ENCODE measurements at regions of chr17 and their contacts with region 1.

Region 1: GRCh38 chr17:44159519-44160210 is 10.8 kb upstream of the ASB16 start:
- DNase-seq: no peak
- H3K4me3 ChIP-seq: no peak overlapping the region
- H3K27ac ChIP-seq: no peak overlapping the region
- H3K4me1 ChIP-seq: no peaks in the 10 kb centered on the region
- H3K27me3 ChIP-seq: no peaks in the 10 kb centered on the region
- CTCF ChIP-seq: no peak

Region 2: GRCh38 chr17:43952717-43953666 is 206.7 kb before region 1 on chr17:
- intact Hi-C with region 1: loop called (anchors 10 kb)
- DNase-seq: no peak
- H3K4me3 ChIP-seq: no peak overlapping the region
- H3K27ac ChIP-seq: no peak overlapping the region
- H3K4me1 ChIP-seq: peaks cover 0 to 17% (median 6%) of the 10 kb centered on the region in 4 donors
- H3K27me3 ChIP-seq: peaks cover 0 to 71% of the 10 kb centered on the region in 2 donors
- CTCF ChIP-seq: no peak

Region 3: GRCh38 chr17:44097110-44097958 is 62.3 kb before region 1 on chr17:
- intact Hi-C with region 1: no loop called
- DNase-seq: no peak
- H3K4me3 ChIP-seq: no peak overlapping the region
- H3K27ac ChIP-seq: peak overlapping the region; percentile 41 to 51
- H3K4me1 ChIP-seq: peaks cover 4 to 76% (median 50%) of the 10 kb centered on the region in 4 donors
- H3K27me3 ChIP-seq: no peaks in the 10 kb centered on the region
- CTCF ChIP-seq: no peak

Region 4: GRCh38 chr17:44108440-44109324 is 51.0 kb before region 1 on chr17:
- intact Hi-C with region 1: no loop called
- DNase-seq: peak; percentile 94 to 97
- H3K4me3 ChIP-seq: peak overlapping the region; percentile 53 to 56
- H3K27ac ChIP-seq: peak overlapping the region; percentile 84 to 91
- H3K4me1 ChIP-seq: peaks cover 22 to 96% (median 89%) of the 10 kb centered on the region in 4 donors
- H3K27me3 ChIP-seq: no peaks in the 10 kb centered on the region
- CTCF ChIP-seq: no peak

Region 5: GRCh38 chr17:44235583-44235936 is 75.9 kb after region 1 on chr17:
- intact Hi-C with region 1: no loop called
- DNase-seq: no peak
- H3K4me3 ChIP-seq: no peak overlapping the region
- H3K27ac ChIP-seq: no peak overlapping the region
- H3K4me1 ChIP-seq: no peaks in the 10 kb centered on the region
- H3K27me3 ChIP-seq: peaks cover 0 to 12% of the 10 kb centered on the region in 2 donors
- CTCF ChIP-seq: no peak

Region 6: DNA sequence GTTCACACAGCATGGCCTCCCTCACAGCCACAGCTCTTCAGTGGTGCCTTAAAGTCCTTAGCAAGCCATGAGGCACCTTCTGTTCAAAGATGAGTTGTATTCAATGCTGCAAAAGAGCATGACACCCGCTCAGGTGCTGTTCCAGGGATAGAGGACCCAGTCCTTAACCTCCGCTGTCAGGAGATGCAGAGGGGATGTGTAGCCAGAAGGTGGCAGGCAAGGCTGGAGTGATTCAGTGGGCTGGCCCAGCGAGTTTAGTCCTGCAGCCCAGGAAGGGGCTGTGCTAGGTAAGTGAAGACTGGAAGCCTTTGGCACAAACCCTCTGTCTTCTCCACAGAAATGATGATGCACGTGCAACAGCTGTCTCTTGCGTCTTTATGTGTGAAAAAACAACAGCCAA is 574.1 kb after region 1 on chr17:
- intact Hi-C with region 1: no loop called
- DNase-seq: no peak
- H3K4me3 ChIP-seq: no peak overlapping the region
- H3K27ac ChIP-seq: no peak overlapping the region
- H3K4me1 ChIP-seq: no peaks in the 10 kb centered on the region
- H3K27me3 ChIP-seq: no peaks in the 10 kb centered on the region
- CTCF ChIP-seq: no peak